ENCODE measurements at regions of chr10 and their contacts with region 1.

Region 1: GRCh38 chr10:26697163-26697921 is at the start of gene PDSS1:
- DNase-seq: peak; percentile 72
- H3K4me3 Mint-ChIP-seq: peak within 1 kb of the TSS; percentile 96
- H3K27ac Mint-ChIP-seq: peak within 1 kb of the TSS; percentile 89
- H3K4me1 Mint-ChIP-seq: peaks cover 39% of the 10 kb centered on the region
- H3K27me3 Mint-ChIP-seq: no peaks in the 10 kb centered on the region
- total RNA-seq, gene PDSS1: 14.5 to 16.0 TPM

Region 2: DNA sequence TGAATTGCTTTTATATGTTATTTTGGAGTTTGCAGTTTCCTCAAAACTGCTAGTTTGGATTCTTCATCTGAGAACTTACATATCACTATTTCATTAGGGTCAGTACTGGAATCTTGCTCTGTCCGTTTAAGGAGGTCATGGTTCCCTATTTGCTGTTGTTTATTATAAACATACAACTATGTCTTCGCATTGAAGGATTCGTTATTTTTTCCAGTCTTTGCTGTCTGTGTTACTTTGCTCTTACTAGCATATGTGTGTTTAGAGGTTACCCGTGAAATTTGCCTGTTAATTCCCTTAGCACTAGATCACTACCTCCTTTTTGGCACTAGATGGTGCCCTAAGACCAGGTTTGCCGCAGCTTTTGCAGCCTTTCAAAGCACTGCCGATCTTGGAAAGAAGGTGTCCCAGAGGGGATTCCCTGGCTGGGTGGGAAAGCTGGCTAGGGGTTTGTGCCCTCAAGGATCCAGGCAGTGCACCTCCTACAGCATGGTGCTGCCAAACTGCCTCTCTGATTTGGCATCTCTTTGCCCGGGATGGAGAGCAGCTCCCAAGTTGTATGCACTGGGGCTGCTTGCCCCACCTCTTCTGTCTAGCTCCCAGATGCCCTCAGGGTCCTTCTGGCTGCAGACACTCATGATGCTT is 362.3 kb before region 1 on chr10:
- CTCF ChIA-PET with region 1: no interaction called
- intact Hi-C with region 1: loop called (anchors 2 kb)
- DNase-seq: peak; percentile 76
- H3K4me3 Mint-ChIP-seq: peak overlapping the region; percentile 71
- H3K27ac Mint-ChIP-seq: peak overlapping the region; percentile 48
- H3K4me1 Mint-ChIP-seq: peaks cover 8% of the 10 kb centered on the region
- H3K27me3 Mint-ChIP-seq: no peaks in the 10 kb centered on the region

Region 3: GRCh38 chr10:26437637-26438461 is 259.5 kb before region 1 on chr10 and contains the start of gene APBB1IP:
- CTCF ChIA-PET with region 1: no interaction called
- intact Hi-C with region 1: loop called (anchors 5 kb)
- DNase-seq: peak; percentile 58
- H3K4me3 Mint-ChIP-seq: peak within 1 kb of the TSS; percentile 81
- H3K27ac Mint-ChIP-seq: peak within 1 kb of the TSS; percentile 98
- H3K4me1 Mint-ChIP-seq: peaks cover 50% of the 10 kb centered on the region
- H3K27me3 Mint-ChIP-seq: no peaks in the 10 kb centered on the region
- total RNA-seq, gene APBB1IP: 29.4 to 30.9 TPM

Region 4: GRCh38 chr10:26468700-26469099 is 228.6 kb before region 1 on chr10:
- CTCF ChIA-PET with region 1: no interaction called
- intact Hi-C with region 1: no loop called
- DNase-seq: peak; percentile 56
- H3K4me3 Mint-ChIP-seq: peak overlapping the region; percentile 66
- H3K27ac Mint-ChIP-seq: peak overlapping the region; percentile 78
- H3K4me1 Mint-ChIP-seq: peaks cover 83% of the 10 kb centered on the region
- H3K27me3 Mint-ChIP-seq: no peaks in the 10 kb centered on the region

Region 5: DNA sequence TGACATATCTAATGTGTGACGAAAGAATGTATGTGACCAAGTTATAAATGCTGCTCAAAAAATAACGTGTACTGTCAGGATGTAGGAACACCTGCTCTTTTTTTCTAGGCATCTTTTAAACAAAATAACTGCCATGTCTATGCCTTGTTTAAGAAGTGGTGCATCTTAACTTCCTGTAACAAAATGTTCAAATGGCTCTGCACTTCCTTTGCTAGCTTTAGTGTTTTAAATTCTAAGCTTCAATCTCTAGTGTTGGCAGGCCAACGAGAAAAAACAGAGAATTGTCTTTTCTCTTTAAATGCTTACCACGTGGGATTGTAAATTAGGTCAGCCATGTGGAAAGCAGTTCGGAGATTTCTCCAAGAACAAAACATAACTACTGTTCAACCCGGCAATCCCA is 14.4 kb before region 1 on chr10:
- CTCF ChIA-PET with region 1: interaction called, 7 read pairs
- intact Hi-C with region 1: loop called (anchors 1 kb)
- DNase-seq: no peak
- H3K4me3 Mint-ChIP-seq: no peak overlapping the region
- H3K27ac Mint-ChIP-seq: peak overlapping the region; percentile 56
- H3K4me1 Mint-ChIP-seq: peaks cover 23% of the 10 kb centered on the region
- H3K27me3 Mint-ChIP-seq: no peaks in the 10 kb centered on the region

Region 6: GRCh38 chr10:26714415-26715136 is 17.2 kb after region 1 on chr10:
- CTCF ChIA-PET with region 1: no interaction called
- intact Hi-C with region 1: no loop called
- DNase-seq: no peak
- H3K4me3 Mint-ChIP-seq: no peak overlapping the region
- H3K27ac Mint-ChIP-seq: no peak overlapping the region
- H3K4me1 Mint-ChIP-seq: peaks cover 2% of the 10 kb centered on the region
- H3K27me3 Mint-ChIP-seq: no peaks in the 10 kb centered on the region

Region 7: DNA sequence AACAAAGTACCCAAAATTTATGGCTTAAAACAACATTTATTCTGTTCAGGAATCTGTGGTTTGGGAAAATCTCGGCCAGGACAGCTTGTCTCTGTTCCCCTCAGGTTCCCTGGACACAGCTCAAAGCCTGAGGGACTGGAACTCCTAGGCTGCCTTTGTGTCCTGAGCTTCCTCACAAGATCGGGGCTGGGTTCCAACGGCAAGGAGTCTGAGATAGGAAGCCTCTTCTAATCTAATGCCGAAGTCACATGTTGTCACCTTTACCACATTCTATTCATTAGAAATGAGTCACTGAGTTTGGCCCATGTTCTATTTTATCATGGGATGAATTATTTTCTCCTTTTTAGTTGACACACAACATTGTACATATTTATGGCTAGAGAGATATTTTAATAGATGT is 322.5 kb after region 1 on chr10:
- CTCF ChIA-PET with region 1: no interaction called
- intact Hi-C with region 1: loop called (anchors 10 kb)
- DNase-seq: no peak
- H3K4me3 Mint-ChIP-seq: no peak overlapping the region
- H3K27ac Mint-ChIP-seq: no peak overlapping the region
- H3K4me1 Mint-ChIP-seq: peaks cover 10% of the 10 kb centered on the region
- H3K27me3 Mint-ChIP-seq: no peaks in the 10 kb centered on the region

Region 8: DNA sequence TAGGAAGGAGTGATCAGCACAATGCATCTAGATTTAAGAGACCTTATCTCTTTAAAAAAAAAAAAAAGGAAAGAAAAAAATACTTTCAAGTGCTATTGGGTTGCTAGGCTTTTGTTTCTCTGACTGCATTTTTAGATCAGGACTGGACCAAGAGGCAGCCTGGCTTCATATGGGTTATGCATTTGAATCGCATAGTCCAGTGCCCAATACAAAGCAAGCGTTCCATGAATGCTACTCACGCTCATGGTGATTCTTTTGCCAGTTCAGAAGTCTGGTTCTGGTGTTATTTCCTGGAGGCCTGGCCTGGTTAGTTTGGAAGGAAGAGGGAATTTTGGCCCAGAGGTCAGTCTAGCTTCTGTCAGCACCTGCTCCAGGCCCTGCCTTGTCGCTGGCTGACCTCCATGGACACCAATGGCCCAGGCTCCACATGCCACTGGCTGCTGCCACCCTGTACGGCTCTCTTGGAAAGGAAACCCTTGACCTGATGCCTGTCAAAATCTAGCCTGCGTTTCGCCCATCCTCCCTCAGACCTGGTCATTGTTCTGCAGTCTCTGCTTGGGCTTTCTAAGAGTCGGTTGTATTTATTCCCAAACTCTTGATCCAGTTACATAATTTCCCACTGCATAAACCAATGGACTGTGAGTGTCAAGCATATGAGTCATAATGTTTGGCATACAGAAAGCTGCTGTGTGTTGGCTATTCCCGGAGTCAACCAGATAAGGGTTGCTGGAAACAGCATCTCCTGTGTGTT is 1122.6 kb after region 1 on chr10:
- CTCF ChIA-PET with region 1: no interaction called
- intact Hi-C with region 1: no loop called
- DNase-seq: no peak
- H3K4me3 Mint-ChIP-seq: no peak overlapping the region
- H3K27ac Mint-ChIP-seq: no peak overlapping the region
- H3K4me1 Mint-ChIP-seq: no peaks in the 10 kb centered on the region
- H3K27me3 Mint-ChIP-seq: peaks cover 3% of the 10 kb centered on the region